Calu3 (cell line): ENCODE measurements at regions of chr14 and their contacts with region 1.

Region 1: DNA sequence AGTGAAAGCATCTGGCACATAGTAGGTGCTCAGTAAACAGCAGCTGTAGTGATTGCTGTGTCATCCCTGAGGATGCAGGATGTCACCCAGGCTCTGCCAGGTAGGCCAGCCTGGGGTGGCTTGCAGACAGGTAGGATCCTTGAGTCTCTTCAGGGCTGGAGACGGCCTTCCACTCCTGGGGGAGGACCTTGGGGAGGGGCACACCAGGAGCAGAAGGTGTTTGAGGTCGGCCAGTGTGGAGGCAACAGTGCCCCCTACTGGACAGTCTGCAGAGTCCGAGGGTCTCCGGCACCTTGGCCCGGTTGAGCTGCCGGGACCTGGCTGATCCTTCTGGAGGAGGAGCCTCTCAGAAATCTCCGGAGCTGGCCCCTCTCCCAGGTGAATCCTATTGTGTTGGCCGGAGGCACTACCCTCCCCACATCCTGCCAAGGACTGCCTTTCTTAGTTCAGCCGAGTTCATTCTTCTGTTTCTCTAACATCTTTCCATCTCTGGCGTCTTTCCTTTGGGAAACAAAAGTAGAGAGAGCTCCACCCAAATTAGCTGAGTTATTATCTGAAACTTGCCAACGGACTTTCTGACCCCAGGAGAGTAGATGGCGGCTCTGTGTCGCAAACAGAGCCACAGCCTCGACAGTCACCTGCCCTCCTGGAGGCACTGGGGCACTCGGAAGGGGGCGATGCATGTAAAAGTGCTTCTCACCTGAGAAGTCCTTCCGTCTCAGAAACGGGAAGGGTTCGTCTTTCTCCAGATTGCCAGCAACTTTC is 41.8 kb upstream of the CLMN start:
- DNase-seq: peak; percentile 29
- H3K4me3 Mint-ChIP-seq: no peak overlapping the region
- H3K27ac Mint-ChIP-seq: no peak overlapping the region
- H3K4me1 Mint-ChIP-seq: peaks cover 15% of the 10 kb centered on the region
- H3K27me3 Mint-ChIP-seq: no peaks in the 10 kb centered on the region
- CTCF ChIP-seq: peak; percentile 63

Region 2: GRCh38 chr14:95183532-95184412 is 177.8 kb before region 1 on chr14:
- CTCF ChIA-PET with region 1: interaction called, 4 read pairs
- intact Hi-C with region 1: loop called (anchors 5 kb)
- DNase-seq: no peak
- H3K4me3 Mint-ChIP-seq: peak overlapping the region; percentile 53
- H3K27ac Mint-ChIP-seq: peak overlapping the region; percentile 85
- H3K4me1 Mint-ChIP-seq: peaks cover 25% of the 10 kb centered on the region
- H3K27me3 Mint-ChIP-seq: no peaks in the 10 kb centered on the region
- CTCF ChIP-seq: no peak